H1 (cell line): ENCODE measurements at regions of chr2 and their contacts with region 1.

Region 1: GRCh38 chr2:108607706-108608301 is 73.5 kb downstream of the LIMS1 start:
- DNase-seq: no peak
- H3K4me3 ChIP-seq: no peak overlapping the region
- H3K27ac ChIP-seq: no peak overlapping the region
- H3K4me1 ChIP-seq: peaks cover 0 to 9% (median 1%) of the 10 kb centered on the region in 4 experiments; a peak in 1 of 7 replicates
- H3K27me3 ChIP-seq: no peaks in the 10 kb centered on the region
- CTCF ChIP-seq: peak in 2 of 3 experiments; percentile 65 to 74; a peak in 3 of 4 replicates
- EP300 ChIP-seq: no peak
- POLR2A ChIP-seq: no peak
- RAD21 ChIP-seq: peak; percentile 70 to 80

Region 2: DNA sequence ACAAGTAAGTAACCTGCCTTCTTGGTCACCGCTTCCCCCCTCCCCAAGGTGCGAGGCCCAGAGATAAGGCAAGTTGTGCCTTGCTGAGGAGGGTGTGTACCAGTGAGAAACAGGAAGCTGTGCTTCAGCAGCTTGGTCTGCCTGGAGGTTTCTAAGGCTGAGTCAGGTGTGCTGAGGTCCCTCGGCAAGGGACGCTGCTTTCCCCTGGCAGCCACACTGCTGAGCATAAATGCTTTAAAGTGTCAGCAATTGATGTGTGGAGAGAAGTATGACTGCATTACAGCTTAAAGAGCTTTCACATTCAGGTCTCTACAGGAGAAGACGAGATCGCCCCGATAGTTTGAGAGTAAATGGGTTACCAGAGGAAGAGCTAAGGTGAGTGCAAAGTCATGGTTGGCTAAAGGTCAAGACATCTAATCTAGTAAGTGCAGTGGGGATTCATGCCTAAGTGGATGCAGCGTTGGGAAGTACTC is 13.3 kb after region 1 on chr2:
- CTCF ChIA-PET with region 1: interaction called, 18 read pairs
- POLR2A ChIA-PET with region 1: interaction called, 3 read pairs
- DNase-seq: peak; percentile 31 to 58
- H3K4me3 ChIP-seq: peak overlapping the region in 2 of 4 experiments; percentile 8 to 49; a peak in 4 of 8 replicates
- H3K27ac ChIP-seq: peak overlapping the region; percentile 35
- H3K4me1 ChIP-seq: peaks cover 0 to 16% (median 12%) of the 10 kb centered on the region in 4 experiments; a peak in 6 of 7 replicates
- H3K27me3 ChIP-seq: no peaks in the 10 kb centered on the region
- CTCF ChIP-seq: no peak
- EP300 ChIP-seq: no peak
- POLR2A ChIP-seq: peak in 1 of 2 experiments; percentile 44; a peak in 2 of 3 replicates
- RAD21 ChIP-seq: no peak

Region 3: DNA sequence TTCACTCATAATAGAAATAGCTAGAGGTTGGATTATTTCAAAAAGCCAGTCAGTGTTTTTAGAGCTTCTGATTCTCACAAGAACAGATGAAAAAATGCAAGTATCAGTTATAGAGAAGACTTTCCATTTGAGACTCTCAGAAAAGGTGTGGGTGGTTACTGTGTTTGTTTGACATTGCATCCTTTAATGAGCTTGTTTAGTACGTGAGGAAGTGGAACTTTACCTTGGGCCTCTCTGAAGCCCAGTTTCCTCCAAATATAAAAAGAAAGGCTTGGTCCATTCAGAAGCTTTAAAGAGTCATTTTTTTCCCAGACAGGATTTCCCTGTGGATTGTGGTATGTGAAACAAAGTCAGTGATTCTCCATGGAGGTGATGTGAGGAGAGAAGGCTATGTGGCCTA is 21.6 kb after region 1 on chr2:
- CTCF ChIA-PET with region 1: interaction called, 109 read pairs
- POLR2A ChIA-PET with region 1: no interaction called
- DNase-seq: no peak
- H3K4me3 ChIP-seq: no peak overlapping the region
- H3K27ac ChIP-seq: no peak overlapping the region
- H3K4me1 ChIP-seq: no peaks in the 10 kb centered on the region
- H3K27me3 ChIP-seq: no peaks in the 10 kb centered on the region
- CTCF ChIP-seq: no peak
- EP300 ChIP-seq: no peak
- POLR2A ChIP-seq: no peak
- RAD21 ChIP-seq: no peak

Region 4: GRCh38 chr2:108870069-108870644 is 262.4 kb after region 1 on chr2:
- CTCF ChIA-PET with region 1: no interaction called
- POLR2A ChIA-PET with region 1: no interaction called
- DNase-seq: no peak
- H3K4me3 ChIP-seq: no peak overlapping the region
- H3K27ac ChIP-seq: no peak overlapping the region
- H3K4me1 ChIP-seq: no peaks in the 10 kb centered on the region
- H3K27me3 ChIP-seq: no peaks in the 10 kb centered on the region
- CTCF ChIP-seq: no peak
- EP300 ChIP-seq: no peak
- POLR2A ChIP-seq: no peak
- RAD21 ChIP-seq: no peak

Region 5: DNA sequence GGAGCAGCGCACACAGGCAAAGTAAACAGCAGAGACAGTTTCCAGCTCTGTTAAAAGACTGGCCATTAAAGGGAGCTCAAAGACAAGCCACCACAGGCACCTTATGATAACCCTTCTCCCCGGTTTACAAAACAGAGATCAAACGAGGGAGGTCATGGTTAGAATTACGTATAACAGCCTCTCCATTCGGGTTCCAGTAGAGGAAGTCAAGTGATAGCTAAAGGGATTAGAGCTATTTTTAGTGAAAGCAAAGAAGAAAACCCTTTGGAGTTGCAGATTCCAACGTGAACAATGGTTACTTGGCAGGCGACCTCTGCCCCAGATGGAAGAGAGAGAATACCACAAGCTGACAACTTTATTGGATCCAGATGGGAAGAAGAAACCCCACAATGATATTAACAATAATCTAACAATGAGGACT is 412.4 kb after region 1 on chr2:
- CTCF ChIA-PET with region 1: no interaction called
- POLR2A ChIA-PET with region 1: no interaction called
- DNase-seq: no peak
- H3K4me3 ChIP-seq: peak overlapping the region in 1 of 4 experiments; percentile 10; a peak in 1 of 8 replicates
- H3K27ac ChIP-seq: no peak overlapping the region
- H3K4me1 ChIP-seq: peaks cover 2 to 13% (median 8%) of the 10 kb centered on the region in 4 experiments
- H3K27me3 ChIP-seq: peaks cover 0 to 2% (median 0%) of the 10 kb centered on the region in 4 experiments; a peak in 4 of 7 replicates
- CTCF ChIP-seq: no peak
- EP300 ChIP-seq: no peak
- POLR2A ChIP-seq: no peak
- RAD21 ChIP-seq: no peak